H1 (cell line): ENCODE measurements at regions of chr12 and their contacts with region 1.

Region 1: DNA sequence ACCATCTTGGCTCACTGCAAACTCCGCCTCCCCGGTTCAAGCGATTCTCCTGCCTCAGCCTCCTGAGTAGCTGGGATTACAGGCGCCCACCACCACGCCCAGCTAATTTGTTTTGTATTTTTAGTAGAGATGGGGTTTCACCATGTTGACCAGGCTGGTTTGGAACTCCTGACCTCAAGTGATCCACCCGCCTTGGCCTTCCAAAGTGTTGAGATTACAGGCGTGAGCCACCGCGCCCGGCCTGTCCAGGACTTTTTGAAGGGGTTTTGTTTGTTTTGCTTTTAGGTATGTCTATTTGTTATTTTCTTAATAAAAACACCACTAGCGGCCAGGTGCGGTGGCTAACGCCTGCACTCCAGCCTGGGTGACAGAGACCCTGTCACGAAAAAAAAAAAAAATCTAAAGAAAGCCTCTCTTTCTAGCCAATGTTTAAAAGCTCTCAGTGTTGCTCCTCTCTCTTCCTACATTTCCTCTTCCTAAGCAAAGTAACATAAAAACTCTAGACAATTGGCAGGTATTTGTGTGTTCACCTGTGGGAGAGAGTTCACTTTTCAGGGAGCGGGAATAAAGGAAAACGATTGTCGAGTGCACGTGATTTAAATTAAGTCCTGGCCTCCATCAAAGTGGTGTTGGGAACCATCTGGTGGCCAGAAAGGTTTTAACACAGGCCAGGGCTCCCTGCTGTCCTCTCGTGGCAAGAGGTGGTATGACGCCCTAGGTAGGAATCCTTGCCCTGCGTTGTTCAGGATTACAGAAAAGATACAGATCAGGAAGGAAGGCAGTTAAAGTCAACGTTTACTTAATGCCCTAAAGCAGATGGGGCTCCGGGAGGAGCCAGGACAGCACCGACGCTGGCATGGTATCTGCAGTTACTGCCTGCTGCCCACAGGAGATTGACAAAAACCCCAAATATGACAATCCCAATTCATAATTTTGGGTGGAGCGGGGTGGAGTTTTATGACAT is 36.2 kb upstream of the ATP23 start:
- DNase-seq: peak; percentile 64 to 95
- H3K4me3 ChIP-seq: no peak overlapping the region
- H3K27ac ChIP-seq: no peak overlapping the region
- H3K4me1 ChIP-seq: no peaks in the 10 kb centered on the region
- H3K27me3 ChIP-seq: peaks cover 0 to 4% (median 0%) of the 10 kb centered on the region in 4 experiments; a peak in 4 of 7 replicates
- CTCF ChIP-seq: peak; percentile 99 to 100 (median 100)
- EP300 ChIP-seq: no peak
- POLR2A ChIP-seq: no peak
- RAD21 ChIP-seq: peak; percentile 99

Region 2: DNA sequence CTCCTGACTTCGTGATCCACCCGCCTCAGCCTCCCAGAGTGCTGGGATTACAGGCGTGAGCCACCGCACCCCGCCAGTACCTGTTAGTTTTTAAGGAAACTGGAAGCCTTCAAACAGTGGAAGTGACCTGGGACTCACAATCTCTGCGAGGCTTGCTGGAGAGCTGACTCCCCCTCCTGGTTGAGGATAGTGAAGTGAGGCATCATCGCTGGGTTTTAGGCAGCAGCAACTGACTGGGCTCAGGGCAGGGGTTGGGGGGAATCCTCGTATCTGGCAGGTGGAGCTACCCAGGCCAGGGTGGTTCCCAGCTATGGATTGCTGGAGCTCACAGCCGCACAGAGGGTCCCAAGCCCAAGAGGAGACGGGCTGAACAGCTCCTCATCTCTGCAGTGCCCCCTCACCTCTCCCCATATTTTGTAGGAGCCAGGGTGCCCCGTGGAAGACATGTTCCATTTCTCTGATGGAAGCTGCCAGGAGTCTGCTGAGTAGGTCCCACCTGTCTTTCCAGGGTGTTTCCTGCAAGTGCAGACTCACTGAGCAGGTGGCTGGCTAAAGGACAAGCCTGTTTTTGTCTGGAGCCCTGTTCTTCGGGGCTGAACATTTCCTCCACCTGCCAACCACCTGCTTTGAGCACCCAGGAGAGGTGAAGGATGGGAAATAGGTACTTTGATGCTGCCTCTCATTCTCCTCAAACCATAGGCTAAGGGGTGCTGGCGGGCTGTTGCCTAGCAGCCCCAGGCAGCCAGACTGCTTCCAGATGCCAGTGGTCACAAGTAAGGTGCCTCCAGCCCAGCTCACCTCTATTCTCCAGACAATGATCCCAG is 89.7 kb before region 1 on chr12:
- CTCF ChIA-PET with region 1: interaction called, 105 read pairs
- POLR2A ChIA-PET with region 1: interaction called, 3 read pairs
- DNase-seq: peak; percentile 50 to 62
- H3K4me3 ChIP-seq: no peak overlapping the region
- H3K27ac ChIP-seq: no peak overlapping the region
- H3K4me1 ChIP-seq: no peaks in the 10 kb centered on the region
- H3K27me3 ChIP-seq: no peaks in the 10 kb centered on the region
- CTCF ChIP-seq: peak; percentile 63 to 70 (median 67)
- EP300 ChIP-seq: no peak
- POLR2A ChIP-seq: no peak
- RAD21 ChIP-seq: peak; percentile 57 to 70

Region 3: DNA sequence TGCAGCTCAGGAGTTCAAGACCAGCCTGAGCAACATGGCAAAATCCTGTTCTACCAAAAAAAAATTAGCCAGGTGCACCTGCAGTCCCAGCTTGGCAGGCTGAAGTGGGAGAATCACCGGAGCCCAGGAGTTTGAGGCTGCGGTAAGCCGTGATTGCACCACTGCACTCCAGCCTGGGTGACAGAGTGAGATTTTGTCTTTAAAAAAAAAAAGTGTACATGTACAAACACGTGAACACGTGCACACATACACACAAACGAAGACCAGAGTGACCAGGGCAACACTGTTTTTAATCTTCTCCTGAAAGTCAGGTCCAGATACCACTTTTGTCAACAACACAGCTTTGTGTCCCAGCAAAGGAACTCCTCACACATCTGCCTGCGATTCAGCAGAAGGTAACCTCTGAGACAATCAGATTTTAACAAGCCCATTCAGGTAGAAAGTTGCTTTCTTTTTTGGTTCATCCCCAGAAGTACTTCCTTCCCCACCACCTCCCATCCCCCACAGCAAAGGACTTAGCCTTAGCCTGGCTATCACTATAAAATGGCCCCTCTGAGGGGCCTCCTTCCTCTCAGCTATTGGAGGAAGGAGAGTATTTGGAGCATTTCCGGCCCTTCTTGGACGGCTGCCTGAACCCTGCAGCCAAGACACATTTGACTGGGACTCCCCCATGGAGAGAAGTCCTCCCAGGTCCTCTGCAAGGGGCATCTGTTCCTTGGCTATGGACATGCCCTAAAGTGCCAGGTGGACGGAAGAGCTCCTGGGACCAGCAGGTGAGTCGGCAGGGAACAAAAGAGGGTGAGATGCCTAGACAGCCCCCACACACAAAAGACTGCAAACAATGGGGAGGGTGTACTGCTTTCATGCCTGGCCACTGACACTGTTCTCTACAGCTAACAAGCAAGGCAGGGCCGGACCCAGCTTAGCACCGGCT is 68.4 kb before region 1 on chr12:
- CTCF ChIA-PET with region 1: interaction called, 181 read pairs
- POLR2A ChIA-PET with region 1: interaction called, 181 read pairs
- DNase-seq: no peak
- H3K4me3 ChIP-seq: peak overlapping the region in 3 of 4 experiments; percentile 0 to 31 (median 14); a peak in 3 of 8 replicates
- H3K27ac ChIP-seq: peak overlapping the region; percentile 55; the same call in 1 of the 2 replicates
- H3K4me1 ChIP-seq: peaks cover 37 to 69% (median 45%) of the 10 kb centered on the region in 4 experiments
- H3K27me3 ChIP-seq: no peaks in the 10 kb centered on the region
- CTCF ChIP-seq: no peak
- EP300 ChIP-seq: peak in 1 of 2 experiments; percentile 30; a peak in 1 of 3 replicates
- POLR2A ChIP-seq: no peak; a peak in 1 of 3 replicates
- RAD21 ChIP-seq: no peak

Region 4: GRCh38 chr12:57865090-57865751 is 39.9 kb before region 1 on chr12:
- CTCF ChIA-PET with region 1: interaction called, 12 read pairs
- POLR2A ChIA-PET with region 1: interaction called, 5 read pairs
- DNase-seq: peak in 1 of 2 experiments; percentile 73
- H3K4me3 ChIP-seq: peak overlapping the region; percentile 25 to 65 (median 41)
- H3K27ac ChIP-seq: no peak overlapping the region
- H3K4me1 ChIP-seq: peaks cover 0 to 12% (median 8%) of the 10 kb centered on the region in 4 experiments; a peak in 5 of 7 replicates
- H3K27me3 ChIP-seq: peaks cover 0 to 20% (median 10%) of the 10 kb centered on the region in 4 experiments; a peak in 5 of 7 replicates
- CTCF ChIP-seq: no peak
- EP300 ChIP-seq: no peak
- POLR2A ChIP-seq: peak in 1 of 2 experiments; percentile 55; a peak in 1 of 3 replicates
- RAD21 ChIP-seq: no peak

Region 5: GRCh38 chr12:57881475-57881874 is 23.7 kb before region 1 on chr12:
- CTCF ChIA-PET with region 1: interaction called, 19 read pairs
- POLR2A ChIA-PET with region 1: interaction called, 3 read pairs
- DNase-seq: no peak
- H3K4me3 ChIP-seq: no peak overlapping the region
- H3K27ac ChIP-seq: no peak overlapping the region
- H3K4me1 ChIP-seq: no peaks in the 10 kb centered on the region
- H3K27me3 ChIP-seq: no peaks in the 10 kb centered on the region
- CTCF ChIP-seq: no peak
- EP300 ChIP-seq: no peak
- POLR2A ChIP-seq: no peak
- RAD21 ChIP-seq: no peak

Region 6: GRCh38 chr12:58026892-58027891 is 122.1 kb after region 1 on chr12:
- CTCF ChIA-PET with region 1: no interaction called
- POLR2A ChIA-PET with region 1: no interaction called
- DNase-seq: no peak
- H3K4me3 ChIP-seq: no peak overlapping the region
- H3K27ac ChIP-seq: no peak overlapping the region
- H3K4me1 ChIP-seq: peaks cover 0 to 3% (median 0%) of the 10 kb centered on the region in 4 experiments; a peak in 1 of 7 replicates
- H3K27me3 ChIP-seq: no peaks in the 10 kb centered on the region
- CTCF ChIP-seq: no peak
- EP300 ChIP-seq: no peak
- POLR2A ChIP-seq: no peak
- RAD21 ChIP-seq: no peak

Region 7: DNA sequence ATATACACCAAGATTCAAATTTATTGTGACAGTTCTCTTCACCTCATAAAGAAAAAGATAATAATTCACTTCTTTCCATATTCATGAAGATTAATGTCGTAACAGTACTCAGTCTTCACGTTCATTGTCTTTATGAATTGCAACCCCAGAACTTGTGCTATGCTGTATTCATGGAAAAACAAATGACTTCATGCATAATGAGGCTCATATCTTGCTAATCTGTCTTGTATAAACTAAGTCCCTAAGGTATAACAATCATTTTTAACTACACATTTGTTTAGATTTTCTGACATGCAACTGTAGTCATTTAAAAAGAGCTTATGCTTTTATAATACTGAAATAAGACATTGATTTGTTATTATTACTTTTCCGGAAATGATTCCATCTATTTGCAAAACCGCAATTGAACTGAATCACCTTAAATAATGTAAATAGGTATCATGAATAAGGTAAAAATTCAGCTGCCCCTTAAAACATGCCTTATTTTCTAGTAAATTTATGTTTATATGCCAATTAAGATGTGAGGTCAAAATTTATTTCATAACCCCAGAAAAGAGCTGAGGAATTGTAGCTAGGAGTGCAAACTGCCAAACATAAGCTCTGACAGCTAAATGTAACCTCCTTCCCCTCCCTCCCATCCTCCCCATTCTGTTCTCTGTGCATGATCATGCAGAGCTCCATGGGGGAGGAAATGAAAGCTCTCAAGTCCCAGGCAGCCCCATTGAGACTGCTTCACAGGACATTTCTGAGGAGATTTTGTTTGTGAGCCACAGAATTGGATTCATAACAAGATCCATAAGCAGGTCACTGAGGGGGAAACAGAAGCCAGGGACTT is 337.9 kb after region 1 on chr12:
- CTCF ChIA-PET with region 1: no interaction called
- POLR2A ChIA-PET with region 1: no interaction called
- DNase-seq: no peak
- H3K4me3 ChIP-seq: no peak overlapping the region
- H3K27ac ChIP-seq: no peak overlapping the region
- H3K4me1 ChIP-seq: no peaks in the 10 kb centered on the region; a peak in 2 of 7 replicates
- H3K27me3 ChIP-seq: no peaks in the 10 kb centered on the region
- CTCF ChIP-seq: no peak
- EP300 ChIP-seq: no peak
- POLR2A ChIP-seq: no peak
- RAD21 ChIP-seq: no peak